ENCODE measurements at regions of chrX and their contacts with region 1.

Region 1: DNA sequence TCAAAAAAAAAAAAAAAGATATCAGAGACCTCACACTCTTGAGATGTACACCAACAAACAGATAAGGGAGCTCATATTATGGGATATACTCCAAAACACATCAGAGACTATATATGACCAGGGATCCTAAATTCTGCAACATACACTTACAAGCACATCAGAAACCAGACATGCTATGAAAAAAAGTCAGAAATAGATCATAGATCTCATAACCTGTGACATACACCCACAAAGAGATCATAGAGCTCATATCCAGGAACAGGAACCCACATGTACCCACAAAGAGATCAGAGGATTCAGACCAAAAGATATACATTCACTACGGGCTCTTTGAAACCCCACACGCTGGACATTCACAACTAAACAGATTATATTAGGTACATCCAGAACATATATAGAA is 30.1 kb downstream of the SUV39H1 start:
- DNase-seq: no peak
- ATAC-seq: no peak
- H3K4me3 ChIP-seq: no peak overlapping the region
- H3K27ac ChIP-seq: no peak overlapping the region
- H3K4me1 ChIP-seq: no peaks in the 10 kb centered on the region
- H3K27me3 ChIP-seq: no peaks in the 10 kb centered on the region
- CTCF ChIP-seq: no peak

Region 2: GRCh38 chrX:48715072-48715471 is 11.5 kb before region 1 on chrX:
- intact Hi-C with region 1: loop called in 1 of 10 experiments (anchors 1 kb)
- DNase-seq: no peak
- ATAC-seq: peak in 4 of 8 donors; percentile 12 to 48 (median 40)
- H3K4me3 ChIP-seq: no peak overlapping the region
- H3K27ac ChIP-seq: no peak overlapping the region
- H3K4me1 ChIP-seq: peaks cover 0 to 8% (median 0%) of the 10 kb centered on the region in 9 donors
- H3K27me3 ChIP-seq: no peaks in the 10 kb centered on the region
- CTCF ChIP-seq: no peak

Measured in heart right ventricle (tissue), 16 donors.